Spleen (tissue), 13 donors: ENCODE measurements at regions of chr16 and their contacts with region 1.

Region 1: GRCh38 chr16:50665128-50665878 is 15.8 kb downstream of the SNX20 start:
- DNase-seq: peak; percentile 93
- H3K4me3 ChIP-seq: peak overlapping the region; percentile 24 to 71 (median 36)
- H3K27ac ChIP-seq: peak overlapping the region; percentile 46 to 85 (median 73)
- H3K4me1 ChIP-seq: peaks cover 14 to 51% (median 38%) of the 10 kb centered on the region in 6 donors
- H3K27me3 ChIP-seq: no peaks in the 10 kb centered on the region
- CTCF ChIP-seq: peak; percentile 66 to 93 (median 88)
- POLR2A ChIP-seq: no peak

Region 2: GRCh38 chr16:50024684-50025536 is 640.4 kb before region 1 on chr16 and contains the start of gene CNEP1R1:
- intact Hi-C with region 1: loop called (anchors 10 kb)
- DNase-seq: peak; percentile 98
- H3K4me3 ChIP-seq: peak within 1 kb of the TSS; percentile 72 to 98 (median 96)
- H3K27ac ChIP-seq: peak within 1 kb of the TSS; percentile 50 to 95 (median 90)
- H3K4me1 ChIP-seq: peaks cover 17 to 52% (median 36%) of the 10 kb centered on the region in 6 donors
- H3K27me3 ChIP-seq: peaks cover 0 to 6% (median 0%) of the 10 kb centered on the region in 7 donors
- CTCF ChIP-seq: peak; percentile 96 to 100 (median 99)
- POLR2A ChIP-seq: no peak
- total RNA-seq, gene CNEP1R1: 22.6 to 45.4 (median 32.9) TPM

Region 3: GRCh38 chr16:50210266-50211038 is 454.9 kb before region 1 on chr16:
- intact Hi-C with region 1: loop called (anchors 10 kb)
- DNase-seq: peak; percentile 82
- H3K4me3 ChIP-seq: no peak overlapping the region
- H3K27ac ChIP-seq: peak overlapping the region in 4 of 8 donors; percentile 27 to 63 (median 42)
- H3K4me1 ChIP-seq: peaks cover 13 to 63% (median 40%) of the 10 kb centered on the region in 6 donors
- H3K27me3 ChIP-seq: no peaks in the 10 kb centered on the region
- CTCF ChIP-seq: peak; percentile 25 to 79 (median 62)
- POLR2A ChIP-seq: no peak

Region 4: DNA sequence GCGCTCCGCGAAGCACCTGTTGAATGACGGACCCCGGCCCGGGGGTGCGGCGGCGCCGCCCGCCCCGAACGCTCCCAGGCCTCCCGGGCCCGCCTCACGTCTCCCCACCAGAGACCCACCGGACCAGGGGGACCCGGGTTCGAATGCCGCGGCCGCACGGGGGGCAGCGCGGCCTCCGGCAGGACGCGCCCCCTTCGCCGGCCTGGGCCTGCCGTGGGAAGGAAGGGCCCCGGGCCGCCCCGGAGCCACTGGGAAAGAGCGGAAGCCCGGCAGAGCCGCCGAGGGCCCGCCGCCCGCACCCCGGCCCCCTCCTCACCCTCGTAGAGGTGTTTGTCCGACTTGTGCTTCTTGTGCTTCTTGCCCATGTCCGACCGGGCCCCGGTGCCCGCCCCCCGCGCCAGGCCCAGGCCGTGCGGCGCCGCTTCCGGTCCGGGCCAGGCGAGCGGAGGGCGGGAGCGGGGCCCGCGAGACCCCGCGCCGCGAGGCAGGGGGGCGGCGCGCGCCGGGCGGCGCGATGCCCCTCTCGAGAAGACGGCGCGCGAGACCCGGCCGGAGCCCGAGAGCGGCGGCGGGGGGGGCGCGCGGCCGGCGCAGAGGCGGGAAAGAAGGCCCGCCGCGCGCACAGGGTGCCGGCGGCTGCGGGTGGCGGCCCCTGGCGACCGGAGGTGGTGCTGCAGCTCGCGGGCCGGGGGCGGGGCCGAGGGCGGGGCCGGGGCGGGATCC is 296.7 kb before region 1 on chr16 and contains the start of gene BRD7:
- intact Hi-C with region 1: loop called (anchors 10 kb)
- DNase-seq: peak; percentile 92
- H3K4me3 ChIP-seq: peak within 1 kb of the TSS; percentile 86 to 100 (median 96)
- H3K27ac ChIP-seq: peak within 1 kb of the TSS; percentile 60 to 89 (median 78)
- H3K4me1 ChIP-seq: peaks cover 25 to 57% (median 42%) of the 10 kb centered on the region in 6 donors
- H3K27me3 ChIP-seq: no peaks in the 10 kb centered on the region
- CTCF ChIP-seq: peak in 7 of 11 experiments; percentile 49 to 88 (median 69)
- POLR2A ChIP-seq: no peak
- total RNA-seq, gene BRD7: 47.4 to 69.7 (median 59.1) TPM

Region 5: GRCh38 chr16:50603206-50604064 is 61.9 kb before region 1 on chr16:
- intact Hi-C with region 1: no loop called
- DNase-seq: no peak
- H3K4me3 ChIP-seq: no peak overlapping the region
- H3K27ac ChIP-seq: peak overlapping the region in 5 of 8 donors; percentile 33 to 68 (median 62)
- H3K4me1 ChIP-seq: peaks cover 0 to 36% (median 17%) of the 10 kb centered on the region in 6 donors
- H3K27me3 ChIP-seq: no peaks in the 10 kb centered on the region
- CTCF ChIP-seq: no peak
- POLR2A ChIP-seq: no peak

Region 6: DNA sequence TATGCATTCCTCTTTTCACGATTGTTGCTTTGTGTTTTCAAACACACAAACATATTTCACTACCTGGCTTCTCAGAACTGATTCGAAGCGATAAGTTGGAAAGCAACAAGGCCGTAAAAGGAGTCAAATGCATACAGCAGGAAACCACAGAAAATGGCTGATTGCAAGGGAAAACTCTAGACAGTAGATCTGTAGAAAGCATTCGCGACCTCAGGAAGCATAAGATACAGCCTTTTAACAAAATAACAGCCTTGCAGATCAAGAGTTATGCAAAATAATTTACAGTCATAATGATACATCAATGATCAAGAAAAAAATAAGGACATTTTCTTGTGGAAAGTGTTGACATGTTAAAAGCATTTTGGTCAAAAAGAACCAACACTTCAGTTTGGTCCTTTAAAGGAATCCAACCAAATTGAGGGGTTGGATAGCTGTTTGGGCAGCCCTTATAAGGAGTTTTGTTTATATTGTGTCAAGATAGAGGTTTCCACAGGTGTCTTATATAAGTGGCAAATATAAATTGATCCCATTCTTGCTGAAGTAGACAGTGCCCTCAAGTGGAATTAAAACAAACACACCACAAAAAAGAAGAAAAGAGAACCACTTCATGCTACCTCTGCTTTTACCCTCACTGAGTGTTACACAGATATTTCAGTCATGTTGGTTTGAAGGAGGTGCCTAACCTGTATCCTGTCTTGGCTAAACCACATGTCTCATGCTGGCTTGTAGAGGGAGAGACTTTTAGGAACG is 82.1 kb after region 1 on chr16:
- intact Hi-C with region 1: loop called (anchors 5 kb)
- DNase-seq: no peak
- H3K4me3 ChIP-seq: peak overlapping the region in 1 of 8 donors; percentile 26
- H3K27ac ChIP-seq: peak overlapping the region; percentile 51 to 100 (median 98)
- H3K4me1 ChIP-seq: peaks cover 64 to 98% (median 88%) of the 10 kb centered on the region in 6 donors
- H3K27me3 ChIP-seq: no peaks in the 10 kb centered on the region
- CTCF ChIP-seq: peak in 10 of 11 experiments; percentile 9 to 67 (median 45)
- POLR2A ChIP-seq: no peak

Region 7: DNA sequence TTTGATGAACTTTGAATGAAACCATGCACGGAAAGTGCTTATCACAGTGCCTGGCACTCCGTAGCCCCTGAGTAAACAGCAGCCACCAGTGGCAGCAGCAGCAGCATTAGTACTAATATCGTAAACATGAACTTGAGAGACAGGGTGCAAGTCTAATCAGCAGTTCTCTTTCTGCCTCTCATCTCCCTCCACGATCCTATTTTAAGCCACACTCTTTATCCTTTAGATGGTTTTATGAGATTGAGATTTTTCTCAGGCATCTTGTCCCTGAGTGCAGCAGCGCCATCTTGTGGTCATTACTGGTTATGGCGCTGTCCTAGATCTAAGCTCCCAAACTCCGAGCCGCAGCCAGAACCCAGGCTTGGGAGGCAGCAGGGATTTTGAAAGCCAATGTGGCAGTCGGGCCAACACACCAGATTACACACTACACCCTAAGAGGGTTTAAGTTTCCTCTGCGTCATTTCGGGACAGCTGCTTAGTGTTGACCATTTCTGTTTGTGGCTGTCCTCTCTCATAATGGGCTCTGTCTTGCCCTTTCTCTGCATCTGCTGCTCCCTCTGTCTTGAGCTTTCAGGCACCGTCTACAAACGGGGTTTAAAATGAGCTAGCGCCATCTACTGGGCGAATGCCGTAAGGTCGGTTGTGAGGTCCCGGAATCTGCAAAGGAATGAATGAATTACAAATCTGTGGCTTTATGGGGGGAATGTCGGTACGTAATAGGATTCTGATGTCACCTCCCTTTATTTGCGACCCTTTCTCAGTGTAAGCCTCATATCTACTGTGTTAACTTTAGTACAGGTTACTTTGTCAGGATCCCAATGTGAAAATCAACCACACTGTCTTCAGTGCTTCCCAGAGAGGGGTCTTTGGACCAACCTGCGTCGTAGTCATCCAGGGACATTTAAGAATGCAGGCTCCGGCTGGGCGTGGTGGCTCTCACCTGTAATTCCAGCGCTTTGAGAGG is 141.1 kb after region 1 on chr16:
- intact Hi-C with region 1: loop called (anchors 10 kb)
- DNase-seq: peak; percentile 90
- H3K4me3 ChIP-seq: peak overlapping the region in 4 of 8 donors; percentile 17 to 63 (median 32)
- H3K27ac ChIP-seq: peak overlapping the region in 6 of 8 donors; percentile 1 to 74 (median 62)
- H3K4me1 ChIP-seq: peaks cover 3 to 14% (median 12%) of the 10 kb centered on the region in 6 donors
- H3K27me3 ChIP-seq: no peaks in the 10 kb centered on the region
- CTCF ChIP-seq: peak; percentile 78 to 97 (median 94)
- POLR2A ChIP-seq: no peak

Region 8: DNA sequence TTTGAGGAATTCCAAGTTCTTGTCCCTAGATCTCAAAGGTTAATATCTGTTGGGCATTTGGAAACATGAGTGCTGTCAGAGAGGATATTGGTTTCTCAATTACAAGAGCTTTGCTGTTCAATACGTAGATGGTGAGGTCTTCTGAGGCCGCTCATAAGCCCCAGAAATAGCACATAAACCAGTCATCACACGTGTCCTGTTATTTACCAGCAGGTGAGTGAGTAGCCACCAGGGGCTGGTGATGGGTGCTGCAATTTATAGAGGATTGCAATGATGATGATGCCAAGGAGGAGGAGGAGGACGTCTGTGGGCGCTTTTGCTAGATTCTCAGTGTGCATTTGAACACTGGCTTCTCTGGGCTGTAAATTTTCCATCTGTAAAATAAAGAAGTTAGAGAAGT is 396.7 kb after region 1 on chr16:
- intact Hi-C with region 1: no loop called
- DNase-seq: no peak
- H3K4me3 ChIP-seq: no peak overlapping the region
- H3K27ac ChIP-seq: no peak overlapping the region
- H3K4me1 ChIP-seq: no peaks in the 10 kb centered on the region
- H3K27me3 ChIP-seq: peaks cover 0 to 12% (median 0%) of the 10 kb centered on the region in 7 donors
- CTCF ChIP-seq: no peak
- POLR2A ChIP-seq: no peak